Ovary (tissue), 10 donors: ENCODE measurements at regions of chr11 and their contacts with region 1.

Region 1: DNA sequence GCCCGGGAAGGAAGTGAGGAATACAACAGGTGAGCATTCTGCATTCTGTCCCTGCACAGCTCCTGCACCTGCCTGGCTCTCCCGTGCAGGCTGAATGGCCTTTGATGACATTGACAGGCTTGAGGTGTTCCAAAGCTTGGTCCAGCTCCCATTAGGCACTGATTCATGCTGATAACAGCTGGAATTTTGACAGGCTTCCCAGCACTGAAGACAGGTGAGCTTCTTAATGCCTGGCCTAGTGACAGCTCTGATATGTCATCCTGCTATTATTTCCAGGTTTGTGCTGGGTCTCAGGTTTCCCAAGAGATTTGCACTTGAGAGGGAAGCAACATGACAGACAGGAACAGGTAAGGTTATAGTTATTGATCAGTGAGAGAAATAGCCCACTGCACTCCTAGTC is 58.0 kb upstream of the MTNR1B start:
- DNase-seq: no peak
- H3K4me3 ChIP-seq: no peak overlapping the region
- H3K27ac ChIP-seq: no peak overlapping the region
- H3K4me1 ChIP-seq: no peaks in the 10 kb centered on the region
- H3K27me3 ChIP-seq: no peaks in the 10 kb centered on the region
- CTCF ChIP-seq: no peak
- EP300 ChIP-seq: no peak
- POLR2A ChIP-seq: no peak

Region 2: GRCh38 chr11:92941676-92942571 is 30.4 kb after region 1 on chr11:
- intact Hi-C with region 1: no loop called
- DNase-seq: no peak
- H3K4me3 ChIP-seq: no peak overlapping the region
- H3K27ac ChIP-seq: no peak overlapping the region
- H3K4me1 ChIP-seq: no peaks in the 10 kb centered on the region
- H3K27me3 ChIP-seq: no peaks in the 10 kb centered on the region
- CTCF ChIP-seq: peak in 1 of 3 donors; percentile 25
- EP300 ChIP-seq: no peak
- POLR2A ChIP-seq: no peak

Region 3: GRCh38 chr11:94854770-94855633 is 1943.5 kb after region 1 on chr11:
- intact Hi-C with region 1: loop called in 1 of 4 experiments (anchors 5 kb)
- DNase-seq: no peak
- H3K4me3 ChIP-seq: no peak overlapping the region
- H3K27ac ChIP-seq: no peak overlapping the region
- H3K4me1 ChIP-seq: no peaks in the 10 kb centered on the region
- H3K27me3 ChIP-seq: no peaks in the 10 kb centered on the region
- CTCF ChIP-seq: no peak
- EP300 ChIP-seq: no peak
- POLR2A ChIP-seq: no peak